MCF 10A (cell line): ENCODE measurements at regions of chr3 and their contacts with region 1.

Region 1: GRCh38 chr3:185733980-185734724 is 90.7 kb downstream of the IGF2BP2 start:
- DNase-seq: peak; percentile 93
- H3K4me3 Mint-ChIP-seq: no peak overlapping the region
- H3K27ac Mint-ChIP-seq: peak overlapping the region; percentile 68
- H3K4me1 Mint-ChIP-seq: peaks cover 51% of the 10 kb centered on the region
- H3K27me3 Mint-ChIP-seq: no peaks in the 10 kb centered on the region
- CTCF ChIP-seq: peak; percentile 58

Region 2: GRCh38 chr3:185687271-185687878 is 46.8 kb before region 1 on chr3:
- CTCF ChIA-PET with region 1: no interaction called
- POLR2A ChIA-PET with region 1: interaction called, 15 read pairs
- intact Hi-C with region 1: no loop called
- DNase-seq: no peak
- H3K4me3 Mint-ChIP-seq: no peak overlapping the region
- H3K27ac Mint-ChIP-seq: peak overlapping the region; percentile 39
- H3K4me1 Mint-ChIP-seq: peaks cover 13% of the 10 kb centered on the region
- H3K27me3 Mint-ChIP-seq: no peaks in the 10 kb centered on the region
- CTCF ChIP-seq: no peak

Region 3: GRCh38 chr3:185744997-185745843 is 11.1 kb after region 1 on chr3:
- CTCF ChIA-PET with region 1: interaction called, 15 read pairs
- POLR2A ChIA-PET with region 1: interaction called, 8 read pairs
- intact Hi-C with region 1: no loop called
- DNase-seq: peak; percentile 57
- H3K4me3 Mint-ChIP-seq: no peak overlapping the region
- H3K27ac Mint-ChIP-seq: no peak overlapping the region
- H3K4me1 Mint-ChIP-seq: peaks cover 19% of the 10 kb centered on the region
- H3K27me3 Mint-ChIP-seq: no peaks in the 10 kb centered on the region
- CTCF ChIP-seq: no peak

Region 4: DNA sequence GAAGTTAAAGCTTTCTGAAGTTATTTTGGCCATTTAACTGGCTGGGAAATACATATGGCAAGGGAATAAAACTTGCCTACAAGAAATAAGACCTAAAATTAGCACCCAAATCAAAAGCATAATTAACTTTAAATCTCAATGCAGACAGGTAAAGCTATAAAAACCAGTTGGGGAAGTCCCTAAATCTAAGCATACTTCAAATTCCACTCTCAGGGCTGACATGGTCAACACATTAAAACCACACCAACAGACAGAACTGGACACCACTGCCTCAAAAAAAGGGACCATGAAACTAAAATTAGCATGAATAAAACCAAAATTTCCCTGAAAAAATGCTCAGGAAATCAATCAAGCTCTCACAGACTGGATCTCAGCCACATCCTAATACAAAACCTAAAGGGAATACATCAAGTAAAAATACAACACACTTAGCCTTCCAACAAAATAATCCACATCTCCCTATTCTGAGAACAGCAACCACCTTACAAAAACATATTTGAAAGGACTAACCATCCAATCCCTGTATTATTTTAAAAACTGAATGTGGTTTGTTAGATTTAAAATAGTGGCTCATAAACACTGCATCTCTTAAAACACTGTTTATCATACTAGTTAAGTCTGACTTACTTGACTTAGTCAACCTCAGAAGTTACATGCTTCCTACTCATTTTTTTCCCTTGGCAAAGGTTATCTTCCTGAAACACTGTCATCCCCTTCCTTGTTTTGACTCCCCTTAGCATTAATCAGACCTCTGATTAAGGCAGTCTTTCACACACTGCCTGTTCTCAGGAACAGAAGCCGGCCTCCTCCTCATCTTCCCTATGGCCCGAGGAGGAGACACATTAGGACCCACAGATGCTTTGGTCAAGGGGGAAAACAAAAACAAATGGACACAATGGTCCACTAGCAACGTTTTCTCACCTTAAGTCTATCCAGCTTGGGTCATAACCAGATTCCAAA is 195.3 kb after region 1 on chr3:
- CTCF ChIA-PET with region 1: interaction called, 6 read pairs
- POLR2A ChIA-PET with region 1: interaction called, 4 read pairs
- intact Hi-C with region 1: loop called (anchors 1 kb)
- DNase-seq: no peak
- H3K4me3 Mint-ChIP-seq: peak overlapping the region; percentile 98
- H3K27ac Mint-ChIP-seq: peak overlapping the region; percentile 21
- H3K4me1 Mint-ChIP-seq: peaks cover 93% of the 10 kb centered on the region
- H3K27me3 Mint-ChIP-seq: no peaks in the 10 kb centered on the region
- CTCF ChIP-seq: no peak